ENCODE measurements at regions of chr17 and their contacts with region 1.

Region 1: GRCh38 chr17:76737082-76737675 is at the start of gene SRSF2:
- DNase-seq: peak; percentile 91 to 99 (median 95)
- ATAC-seq: peak; percentile 74
- H3K4me3 ChIP-seq: peak within 1 kb of the TSS; percentile 91
- H3K27ac ChIP-seq: peak within 1 kb of the TSS; percentile 99
- H3K4me1 ChIP-seq: peaks cover 5 to 27% of the 10 kb centered on the region in 2 experiments
- H3K27me3 ChIP-seq: no peaks in the 10 kb centered on the region
- CTCF ChIP-seq: 0 out of 6 replicates have a peak, but pooled peaks of 1 of the 3 experiments have one; percentile 3
- EP300 ChIP-seq: peak; percentile 79
- POLR2A ChIP-seq: peak; percentile 100
- RAD21 ChIP-seq: no peak
- polyA plus RNA-seq, gene SRSF2: 161 to 186 TPM

Region 2: GRCh38 chr17:76701471-76701967 is 35.7 kb before region 1 on chr17:
- CTCF ChIA-PET with region 1: no interaction called
- POLR2A ChIA-PET with region 1: no interaction called
- in situ Hi-C with region 1: no loop called
- intact Hi-C with region 1: no loop called
- DNase-seq: no peak
- ATAC-seq: no peak
- H3K4me3 ChIP-seq: no peak overlapping the region
- H3K27ac ChIP-seq: no peak overlapping the region
- H3K4me1 ChIP-seq: peaks cover 15 to 38% of the 10 kb centered on the region in 2 experiments
- H3K27me3 ChIP-seq: no peaks in the 10 kb centered on the region
- CTCF ChIP-seq: no peak
- EP300 ChIP-seq: no peak
- POLR2A ChIP-seq: no peak
- RAD21 ChIP-seq: no peak

Region 3: DNA sequence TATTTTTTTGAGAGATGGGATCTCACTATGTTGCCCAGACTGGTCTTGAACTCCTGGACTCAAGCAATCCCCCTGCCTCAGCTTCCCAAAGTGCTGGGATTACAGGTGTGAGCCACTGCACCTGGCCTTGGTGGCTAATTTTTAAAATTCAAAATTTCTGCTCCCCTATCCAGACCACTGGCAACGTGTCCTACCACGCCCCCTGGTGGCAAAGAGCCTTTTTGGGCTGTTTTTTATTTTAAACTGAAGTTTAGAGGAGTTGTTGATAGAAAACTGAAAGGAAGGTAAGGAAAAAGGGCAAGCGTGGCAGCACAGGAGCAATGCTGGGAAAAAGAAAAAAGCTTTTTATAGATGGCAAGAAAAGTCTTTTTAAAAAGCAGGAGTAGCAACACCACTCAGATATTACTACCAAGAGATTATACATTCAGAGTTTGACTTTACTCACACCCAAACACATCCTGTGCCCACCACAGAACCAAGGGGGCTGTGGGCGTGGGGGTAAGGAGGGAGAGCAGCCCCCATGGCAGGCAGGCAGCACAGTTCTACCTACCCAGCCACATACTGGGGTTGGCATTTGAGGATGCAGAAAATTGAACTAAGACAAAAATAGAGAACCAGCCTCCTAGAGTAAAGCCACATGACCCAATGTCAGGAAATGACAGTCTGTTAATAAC is 22.2 kb before region 1 on chr17:
- CTCF ChIA-PET with region 1: no interaction called
- POLR2A ChIA-PET with region 1: interaction called, 75 read pairs
- in situ Hi-C with region 1: no loop called
- intact Hi-C with region 1: no loop called
- DNase-seq: peak in 3 of 4 experiments; percentile 47 to 79 (median 56)
- ATAC-seq: peak; percentile 36
- H3K4me3 ChIP-seq: no peak overlapping the region
- H3K27ac ChIP-seq: no peak overlapping the region; the same call in 2 of the 3 replicates
- H3K4me1 ChIP-seq: peaks cover 26 to 35% of the 10 kb centered on the region in 2 experiments
- H3K27me3 ChIP-seq: no peaks in the 10 kb centered on the region
- CTCF ChIP-seq: peak; percentile 79 to 84 (median 82)
- EP300 ChIP-seq: no peak
- POLR2A ChIP-seq: no peak
- RAD21 ChIP-seq: peak; percentile 59 to 70

Region 4: DNA sequence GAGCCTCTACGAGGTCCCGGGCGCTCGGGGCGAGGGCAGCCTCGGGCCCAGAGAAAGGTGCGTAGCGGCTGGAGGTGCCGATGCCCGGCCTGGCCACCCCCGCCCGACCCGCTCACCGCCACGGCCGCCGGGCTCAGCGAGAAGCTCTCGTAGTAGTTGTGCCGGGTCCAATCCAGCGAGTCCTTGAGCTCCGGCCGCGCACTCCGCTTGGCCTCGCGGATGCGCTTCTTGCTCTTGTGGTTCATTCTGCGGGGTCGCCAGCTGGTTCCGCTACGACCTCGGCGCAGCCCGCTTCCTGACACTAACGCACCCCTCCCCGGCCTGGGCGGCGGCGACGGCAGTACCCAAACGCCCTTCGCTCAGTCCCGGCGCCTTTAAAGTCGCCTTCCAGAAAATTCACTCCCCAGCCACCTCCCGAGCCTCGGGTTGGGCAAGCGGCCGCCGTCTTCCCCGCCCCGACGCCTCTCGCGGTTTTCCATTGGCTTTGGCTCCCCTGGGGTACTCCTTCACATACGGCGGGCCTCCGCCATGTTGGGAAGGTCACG is 10.9 kb before region 1 on chr17 and contains the start of gene JMJD6:
- CTCF ChIA-PET with region 1: interaction called, 3 read pairs
- POLR2A ChIA-PET with region 1: interaction called, 75 read pairs
- in situ Hi-C with region 1: no loop called
- intact Hi-C with region 1: no loop called
- DNase-seq: peak; percentile 87 to 98 (median 92)
- ATAC-seq: peak; percentile 92
- H3K4me3 ChIP-seq: peak within 1 kb of the TSS; percentile 82
- H3K27ac ChIP-seq: peak within 1 kb of the TSS; percentile 96
- H3K4me1 ChIP-seq: peaks cover 17 to 40% of the 10 kb centered on the region in 2 experiments; a peak in 4 of 5 replicates
- H3K27me3 ChIP-seq: no peaks in the 10 kb centered on the region
- CTCF ChIP-seq: no peak
- EP300 ChIP-seq: no peak
- POLR2A ChIP-seq: peak; percentile 82
- RAD21 ChIP-seq: no peak
- polyA plus RNA-seq, gene JMJD6: 2.5 to 10.5 TPM

Region 5: GRCh38 chr17:76747716-76748363 is 10.7 kb after region 1 on chr17:
- CTCF ChIA-PET with region 1: no interaction called
- POLR2A ChIA-PET with region 1: interaction called, 31 read pairs
- in situ Hi-C with region 1: no loop called
- intact Hi-C with region 1: no loop called
- DNase-seq: peak in 2 of 4 experiments; percentile 5 to 17
- ATAC-seq: no peak
- H3K4me3 ChIP-seq: no peak overlapping the region
- H3K27ac ChIP-seq: no peak overlapping the region
- H3K4me1 ChIP-seq: no peaks in the 10 kb centered on the region; a peak in 2 of 5 replicates
- H3K27me3 ChIP-seq: no peaks in the 10 kb centered on the region
- CTCF ChIP-seq: no peak
- EP300 ChIP-seq: no peak
- POLR2A ChIP-seq: no peak
- RAD21 ChIP-seq: no peak

Region 6: DNA sequence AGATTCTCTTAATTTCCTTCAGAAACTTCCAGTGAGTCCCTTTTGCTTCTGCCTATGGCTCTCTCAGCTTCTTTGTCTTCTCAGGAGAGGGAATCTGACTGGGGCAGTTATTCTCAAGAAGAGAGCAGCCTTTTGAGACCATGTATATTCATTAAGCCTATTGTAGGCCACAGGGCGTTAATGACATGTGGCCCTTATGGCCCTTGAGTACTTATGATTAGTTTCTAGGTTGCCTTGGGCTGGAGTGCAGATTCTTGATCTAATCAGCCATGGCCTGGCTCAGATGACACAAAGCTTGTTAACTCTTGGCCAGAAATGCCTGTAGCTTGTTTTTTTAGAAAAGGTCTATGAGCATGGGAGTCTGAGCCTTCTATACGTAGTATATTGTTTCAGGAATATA is 18.1 kb after region 1 on chr17:
- CTCF ChIA-PET with region 1: no interaction called
- POLR2A ChIA-PET with region 1: interaction called, 17 read pairs
- in situ Hi-C with region 1: no loop called
- intact Hi-C with region 1: no loop called
- DNase-seq: peak in 2 of 4 experiments; percentile 12 to 17
- ATAC-seq: no peak
- H3K4me3 ChIP-seq: no peak overlapping the region
- H3K27ac ChIP-seq: no peak overlapping the region
- H3K4me1 ChIP-seq: no peaks in the 10 kb centered on the region
- H3K27me3 ChIP-seq: no peaks in the 10 kb centered on the region
- CTCF ChIP-seq: no peak
- EP300 ChIP-seq: no peak
- POLR2A ChIP-seq: no peak
- RAD21 ChIP-seq: no peak

Region 7: GRCh38 chr17:76772842-76773525 is 35.8 kb after region 1 on chr17:
- CTCF ChIA-PET with region 1: no interaction called
- POLR2A ChIA-PET with region 1: interaction called, 17 read pairs
- in situ Hi-C with region 1: no loop called
- intact Hi-C with region 1: no loop called
- DNase-seq: peak in 2 of 4 experiments; percentile 32 to 58
- ATAC-seq: peak; percentile 88
- H3K4me3 ChIP-seq: no peak overlapping the region
- H3K27ac ChIP-seq: peak overlapping the region; percentile 5; the same call in 1 of the 3 replicates
- H3K4me1 ChIP-seq: peaks cover 0 to 7% of the 10 kb centered on the region in 2 experiments; a peak in 2 of 5 replicates
- H3K27me3 ChIP-seq: no peaks in the 10 kb centered on the region
- CTCF ChIP-seq: 0 out of 6 replicates have a peak, but pooled peaks of 1 of the 3 experiments have one; percentile 1
- EP300 ChIP-seq: no peak
- POLR2A ChIP-seq: no peak
- RAD21 ChIP-seq: no peak

Region 8: GRCh38 chr17:76791053-76791980 is 54.1 kb after region 1 on chr17:
- CTCF ChIA-PET with region 1: no interaction called
- POLR2A ChIA-PET with region 1: interaction called, 4 read pairs
- in situ Hi-C with region 1: no loop called
- intact Hi-C with region 1: loop called (anchors 2 kb)
- DNase-seq: peak; percentile 57 to 81 (median 74)
- ATAC-seq: peak; percentile 76
- H3K4me3 ChIP-seq: no peak overlapping the region
- H3K27ac ChIP-seq: peak overlapping the region; percentile 40; the same call in 1 of the 3 replicates
- H3K4me1 ChIP-seq: peaks cover 18 to 31% of the 10 kb centered on the region in 2 experiments
- H3K27me3 ChIP-seq: no peaks in the 10 kb centered on the region
- CTCF ChIP-seq: no peak
- EP300 ChIP-seq: peak; percentile 3; the same call in 1 of the 2 replicates
- POLR2A ChIP-seq: no peak
- RAD21 ChIP-seq: no peak